Testis (tissue), 5 donors: ENCODE measurements at regions of chr11 and their contacts with region 1.

Region 1: GRCh38 chr11:36306888-36307287 is 10.8 kb downstream of the PRR5L start:
- DNase-seq: peak; percentile 26
- H3K4me3 ChIP-seq: no peak overlapping the region
- H3K27ac ChIP-seq: no peak overlapping the region
- H3K4me1 ChIP-seq: no peaks in the 10 kb centered on the region
- H3K27me3 ChIP-seq: no peaks in the 10 kb centered on the region
- CTCF ChIP-seq: peak in 1 of 3 experiments; percentile 44
- POLR2A ChIP-seq: no peak

Region 2: DNA sequence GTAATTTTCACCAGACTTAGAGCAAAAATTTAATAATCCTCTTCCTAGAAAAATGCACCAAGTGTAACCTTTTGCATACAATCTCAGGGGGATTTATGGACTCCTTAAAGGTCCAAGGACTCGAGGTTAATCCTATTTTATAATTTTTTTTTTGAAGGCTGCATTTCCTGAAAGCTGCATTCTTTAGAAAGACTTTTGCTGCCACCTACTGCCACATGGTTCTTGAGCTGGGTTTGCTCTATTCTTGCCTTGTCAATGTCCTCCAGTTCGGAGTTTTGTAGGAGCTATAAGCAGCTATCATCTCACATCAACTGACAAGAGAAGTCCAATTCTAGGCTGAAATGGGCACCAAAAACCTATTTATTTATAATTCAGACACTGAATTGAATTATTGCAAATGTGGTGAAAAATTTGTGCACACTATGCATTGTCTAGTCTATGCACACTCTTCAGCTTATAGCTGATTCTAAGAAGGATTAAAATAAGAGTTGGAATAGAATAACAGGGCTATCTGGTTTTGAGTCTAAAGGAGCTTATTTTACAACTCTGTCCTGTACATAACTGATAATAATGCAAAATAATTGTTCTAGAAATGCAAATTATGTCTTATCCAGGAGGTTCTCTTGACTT is 171.9 kb after region 1 on chr11:
- intact Hi-C with region 1: loop called (anchors 5 kb)
- DNase-seq: peak; percentile 60
- H3K4me3 ChIP-seq: no peak overlapping the region
- H3K27ac ChIP-seq: no peak overlapping the region
- H3K4me1 ChIP-seq: no peaks in the 10 kb centered on the region
- H3K27me3 ChIP-seq: no peaks in the 10 kb centered on the region
- CTCF ChIP-seq: peak; percentile 11 to 41 (median 35)
- POLR2A ChIP-seq: no peak

Region 3: GRCh38 chr11:36840378-36840777 is 533.5 kb after region 1 on chr11:
- intact Hi-C with region 1: no loop called
- DNase-seq: no peak
- H3K4me3 ChIP-seq: no peak overlapping the region
- H3K27ac ChIP-seq: no peak overlapping the region
- H3K4me1 ChIP-seq: no peaks in the 10 kb centered on the region
- H3K27me3 ChIP-seq: no peaks in the 10 kb centered on the region
- CTCF ChIP-seq: no peak
- POLR2A ChIP-seq: no peak